ENCODE measurements at regions of chr6 and their contacts with region 1.

Region 1: GRCh38 chr6:155248008-155249001 is 15.5 kb upstream of the CLDN20 start:
- DNase-seq: peak; percentile 59
- H3K4me3 ChIP-seq: no peak overlapping the region
- H3K27ac ChIP-seq: peak overlapping the region; percentile 6 to 8
- H3K4me1 ChIP-seq: no peaks in the 10 kb centered on the region
- H3K27me3 ChIP-seq: no peaks in the 10 kb centered on the region
- CTCF ChIP-seq: peak; percentile 48 to 80 (median 76)
- POLR2A ChIP-seq: no peak

Region 2: DNA sequence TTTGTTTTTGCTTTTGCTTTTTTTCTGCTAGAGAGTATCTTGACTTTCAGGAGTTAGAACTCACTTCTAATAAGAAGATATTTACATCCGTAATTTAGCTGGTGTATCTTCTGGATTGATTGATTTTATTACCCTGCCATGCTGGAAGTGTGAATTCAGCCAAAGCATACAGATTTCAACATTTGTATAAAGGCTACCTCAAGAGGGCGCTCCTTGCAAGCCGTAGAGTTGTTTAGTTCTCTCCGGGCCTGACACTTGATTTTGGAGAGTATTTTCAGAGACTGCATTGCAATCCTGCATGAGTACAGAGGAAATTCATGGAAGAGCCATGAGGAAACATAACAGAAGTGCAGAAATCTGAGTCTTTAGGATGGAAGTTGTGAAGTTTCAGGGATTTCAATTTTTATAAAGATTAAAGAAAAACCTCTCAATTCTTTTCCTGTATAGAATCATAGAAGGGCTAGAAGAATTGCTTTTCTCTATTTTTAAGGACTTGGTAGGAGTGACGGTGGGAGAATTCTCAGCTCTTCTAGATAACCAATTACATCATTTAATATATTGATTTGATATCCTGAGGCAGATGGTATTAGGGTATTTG is 319.9 kb before region 1 on chr6:
- intact Hi-C with region 1: loop called (anchors 5 kb)
- DNase-seq: peak; percentile 52
- H3K4me3 ChIP-seq: no peak overlapping the region
- H3K27ac ChIP-seq: no peak overlapping the region
- H3K4me1 ChIP-seq: no peaks in the 10 kb centered on the region
- H3K27me3 ChIP-seq: no peaks in the 10 kb centered on the region
- CTCF ChIP-seq: peak; percentile 28 to 77 (median 69)
- POLR2A ChIP-seq: no peak